ENCODE measurements at regions of chr14 and their contacts with region 1.

Region 1: GRCh38 chr14:60184146-60184904 is 19.1 kb upstream of the DHRS7 start:
- DNase-seq: no peak
- ATAC-seq: peak; percentile 55

Region 2: DNA sequence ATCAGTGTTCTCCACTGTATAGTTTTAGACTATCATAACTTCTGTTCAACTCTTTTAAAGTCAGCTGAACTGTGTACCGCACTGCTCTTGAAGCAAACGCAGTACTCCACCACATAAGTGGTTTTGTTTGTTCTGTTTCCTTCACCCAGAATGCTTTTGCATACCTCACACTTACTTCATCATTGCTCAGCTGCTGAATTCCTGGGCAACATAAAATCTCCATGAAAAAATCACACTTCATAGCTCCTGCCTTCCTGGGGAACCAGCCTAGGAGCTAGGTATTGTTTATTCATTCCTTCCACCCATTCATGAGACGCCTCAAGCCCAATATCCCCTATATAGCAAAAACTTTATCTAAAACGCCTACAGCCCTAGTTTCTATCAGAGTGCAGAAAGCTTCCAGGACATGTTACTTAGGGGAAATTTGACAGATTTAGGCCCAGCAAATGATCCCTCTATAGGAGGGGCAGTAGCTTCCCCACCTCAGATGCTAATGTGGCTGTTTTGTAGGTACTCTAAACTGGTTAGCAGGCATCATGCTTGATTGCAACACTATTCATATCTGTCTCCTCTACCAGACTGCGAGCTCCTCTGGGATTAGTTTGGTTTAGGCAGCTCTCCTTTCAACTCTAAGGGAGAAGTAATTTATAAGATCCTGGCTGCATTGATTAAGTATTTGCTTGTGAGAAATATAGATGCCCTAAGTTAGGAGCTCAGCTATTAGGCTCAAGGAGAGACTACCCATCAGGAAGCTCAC is 219.9 kb before region 1 on chr14:
- intact Hi-C with region 1: loop called (anchors 5 kb)
- DNase-seq: no peak
- ATAC-seq: peak; percentile 12

Region 3: DNA sequence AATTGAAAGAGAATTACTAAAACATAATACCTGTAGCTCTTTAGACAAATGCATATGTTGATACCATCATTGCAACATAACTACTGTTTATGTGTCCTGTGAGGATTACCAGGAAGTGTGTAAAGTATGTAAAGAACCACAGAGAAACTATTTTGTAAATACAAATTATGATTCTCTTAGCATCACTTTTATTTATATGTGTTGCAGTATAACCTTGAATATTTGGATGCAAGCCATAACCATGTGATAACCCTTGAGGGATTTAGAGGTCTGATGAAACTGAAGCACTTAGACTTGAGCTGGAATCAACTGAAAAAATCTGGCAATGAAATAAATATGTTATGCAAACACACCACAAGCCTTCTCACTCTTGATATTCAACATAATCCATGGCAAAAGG is 186.9 kb before region 1 on chr14:
- intact Hi-C with region 1: no loop called
- DNase-seq: no peak
- ATAC-seq: peak; percentile 61

Region 4: GRCh38 chr14:60025571-60025970 is 158.8 kb before region 1 on chr14:
- intact Hi-C with region 1: no loop called
- DNase-seq: no peak
- ATAC-seq: no peak

Region 5: DNA sequence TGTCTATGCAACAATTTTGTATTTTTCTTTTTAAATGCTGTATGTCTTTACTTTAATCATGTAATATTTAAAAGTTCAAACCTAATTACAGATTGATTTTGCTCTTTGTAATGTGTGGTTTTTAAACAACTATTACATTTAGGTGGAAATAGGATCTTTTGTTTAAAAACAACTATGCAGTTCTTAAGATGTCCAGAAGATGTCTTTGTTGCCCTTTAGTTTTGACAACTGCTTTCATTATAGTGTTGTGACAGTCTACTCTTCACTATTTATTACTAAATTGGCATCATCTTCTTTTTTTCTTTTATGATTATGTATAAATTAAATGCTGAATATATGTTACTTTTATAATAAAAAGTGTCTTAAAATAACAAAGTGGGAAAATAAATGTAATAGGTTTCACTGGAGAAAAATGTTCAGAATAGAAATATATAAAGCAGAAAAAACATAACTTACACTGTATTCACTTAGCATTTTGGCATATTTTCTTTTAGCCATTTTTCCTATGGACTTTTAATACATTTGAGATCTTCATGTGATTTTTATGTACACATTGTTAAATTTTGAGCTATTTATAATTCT is 119.7 kb before region 1 on chr14:
- intact Hi-C with region 1: loop called (anchors 5 kb)
- DNase-seq: no peak
- ATAC-seq: no peak

Measured in left ventricle myocardium superior (tissue), 1 donor.